ENCODE measurements at regions of chr19 and their contacts with region 1.

Region 1: GRCh38 chr19:33406521-33407139 is 33.1 kb downstream of the CEBPG start:
- DNase-seq: peak; percentile 63 to 83 (median 72)
- ATAC-seq: peak; percentile 47 to 79 (median 74)
- H3K4me3 ChIP-seq: no peak overlapping the region
- H3K27ac ChIP-seq: no peak overlapping the region
- H3K4me1 ChIP-seq: peaks cover 0 to 13% (median 0%) of the 10 kb centered on the region in 12 donors
- H3K27me3 ChIP-seq: no peaks in the 10 kb centered on the region
- CTCF ChIP-seq: peak; percentile 90 to 97 (median 94)
- POLR2A ChIP-seq: no peak

Region 2: DNA sequence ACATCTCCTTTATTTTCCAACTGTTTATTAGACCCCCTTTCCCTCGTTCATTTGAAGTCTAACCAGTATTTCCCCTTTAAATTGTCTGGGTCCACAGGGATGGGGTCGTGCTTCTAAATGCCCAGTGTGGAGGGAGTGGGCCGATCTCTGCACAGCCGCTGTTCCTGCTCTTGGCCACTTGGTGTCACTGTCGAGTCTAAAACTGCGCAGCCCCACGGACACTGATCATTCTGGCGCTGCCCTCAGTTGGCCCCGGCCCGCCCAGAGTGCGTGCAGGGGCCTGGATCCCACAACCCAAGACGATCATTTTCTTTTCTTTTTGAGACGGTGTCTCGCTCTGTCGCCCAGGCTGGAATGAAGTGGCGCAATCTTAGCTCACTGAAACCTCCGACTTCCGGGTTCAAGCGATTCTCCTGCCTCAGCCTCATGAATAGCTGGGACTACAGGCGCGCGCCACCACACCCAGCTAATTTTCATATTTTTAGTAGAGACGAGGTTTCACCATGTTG is 262.7 kb before region 1 on chr19:
- intact Hi-C with region 1: loop called in 8 of 10 experiments (anchors 5 to 10 kb)
- DNase-seq: peak; percentile 43 to 79 (median 68)
- ATAC-seq: peak; percentile 88 to 97 (median 95)
- H3K4me3 ChIP-seq: no peak overlapping the region
- H3K27ac ChIP-seq: no peak overlapping the region
- H3K4me1 ChIP-seq: peaks cover 0 to 5% (median 0%) of the 10 kb centered on the region in 12 donors
- H3K27me3 ChIP-seq: peaks cover 0 to 7% (median 0%) of the 10 kb centered on the region in 9 donors
- CTCF ChIP-seq: peak; percentile 80 to 94 (median 90)
- POLR2A ChIP-seq: no peak

Region 3: DNA sequence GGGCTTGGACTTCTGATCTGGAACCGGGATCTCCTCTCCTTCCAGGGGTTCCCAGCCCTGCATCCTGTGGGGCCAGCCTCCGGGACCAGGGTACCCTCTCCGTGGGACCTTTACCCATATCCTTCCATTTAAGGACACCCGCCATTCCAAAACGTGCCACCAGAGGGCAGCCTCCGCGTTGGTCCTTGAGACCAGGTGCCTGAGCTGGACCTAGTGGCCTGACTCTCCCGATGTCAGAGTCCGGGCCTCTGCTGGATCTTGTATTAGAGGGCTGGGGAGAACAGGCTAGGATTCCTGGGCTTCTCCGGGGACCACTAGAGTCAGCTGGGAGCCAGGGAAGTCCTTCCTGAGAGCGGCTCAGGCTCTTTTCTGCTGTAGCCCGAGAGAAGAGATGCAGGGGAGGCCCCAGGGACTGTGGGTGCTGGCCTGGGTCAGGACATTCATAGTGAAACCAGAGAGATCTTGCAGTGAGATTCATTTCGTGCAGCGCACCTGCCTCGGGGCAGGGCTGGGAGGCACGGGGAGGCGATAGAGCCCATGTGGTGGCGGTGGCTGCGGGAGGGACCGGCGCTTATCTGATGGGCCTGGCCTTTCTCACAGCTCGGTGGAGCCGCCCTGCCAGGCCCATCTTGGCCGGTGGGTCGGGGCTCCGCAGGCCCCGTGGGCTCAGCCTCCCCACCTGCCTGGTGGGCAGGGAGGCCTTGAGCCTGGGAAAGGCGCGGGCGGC is 171.2 kb before region 1 on chr19:
- intact Hi-C with region 1: loop called (anchors 1 to 2 kb)
- DNase-seq: peak; percentile 61 to 91 (median 77)
- ATAC-seq: peak in 3 of 4 donors; percentile 67 to 82 (median 71)
- H3K4me3 ChIP-seq: no peak overlapping the region
- H3K27ac ChIP-seq: no peak overlapping the region
- H3K4me1 ChIP-seq: peaks cover 0 to 3% (median 0%) of the 10 kb centered on the region in 12 donors
- H3K27me3 ChIP-seq: peaks cover 0 to 33% (median 6%) of the 10 kb centered on the region in 9 donors
- CTCF ChIP-seq: peak; percentile 82 to 94 (median 90)
- POLR2A ChIP-seq: no peak

Region 4: DNA sequence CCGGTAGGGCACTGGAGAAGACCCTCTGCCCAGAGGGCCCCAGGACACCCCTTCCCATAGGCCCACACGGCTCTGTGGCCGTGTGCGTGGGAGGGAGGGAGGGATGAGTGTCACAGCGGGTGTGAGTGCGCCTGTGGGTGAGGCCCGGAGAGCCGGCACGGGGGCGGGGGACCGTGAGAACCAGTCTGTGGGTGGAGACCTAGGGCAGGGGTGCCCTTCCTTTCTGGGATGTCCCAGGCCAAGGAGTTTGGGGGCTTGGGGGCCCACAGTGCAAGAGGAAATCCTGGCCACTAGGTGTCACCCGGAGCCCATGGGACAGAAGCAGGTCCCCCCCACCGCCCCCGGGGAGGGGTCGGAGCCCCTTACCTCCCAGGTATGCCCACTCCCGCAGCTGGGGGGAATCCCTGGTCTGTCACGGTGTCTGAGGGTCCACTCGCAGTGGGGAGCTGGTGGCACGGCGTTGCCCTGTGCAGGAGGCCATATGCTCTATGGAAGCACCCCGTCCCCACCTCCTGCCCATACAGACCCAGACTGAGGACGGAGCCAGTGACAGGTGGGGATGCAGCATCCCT is 165.0 kb before region 1 on chr19:
- intact Hi-C with region 1: loop called in 6 of 10 experiments (anchors 1 to 2 kb)
- DNase-seq: peak in 2 of 5 donors; percentile 27 to 69
- ATAC-seq: peak in 3 of 4 donors; percentile 51 to 67 (median 58)
- H3K4me3 ChIP-seq: no peak overlapping the region
- H3K27ac ChIP-seq: no peak overlapping the region
- H3K4me1 ChIP-seq: peaks cover 0 to 8% (median 2%) of the 10 kb centered on the region in 12 donors
- H3K27me3 ChIP-seq: peaks cover 0 to 17% (median 0%) of the 10 kb centered on the region in 9 donors
- CTCF ChIP-seq: peak; percentile 56 to 80 (median 72)
- POLR2A ChIP-seq: no peak

Region 5: GRCh38 chr19:33302175-33302973 is 104.3 kb before region 1 on chr19 and contains the start of gene CEBPA:
- intact Hi-C with region 1: loop called in 7 of 10 experiments (anchors 5 to 10 kb)
- DNase-seq: peak; percentile 74 to 92 (median 80)
- ATAC-seq: peak; percentile 52 to 94 (median 90)
- H3K4me3 ChIP-seq: peak within 1 kb of the TSS; percentile 49 to 93 (median 72)
- H3K27ac ChIP-seq: peak within 1 kb of the TSS in 9 of 12 donors; percentile 1 to 88 (median 57)
- H3K4me1 ChIP-seq: peaks cover 0 to 43% (median 15%) of the 10 kb centered on the region in 12 donors
- H3K27me3 ChIP-seq: peaks cover 0 to 44% (median 18%) of the 10 kb centered on the region in 9 donors
- CTCF ChIP-seq: peak in 8 of 12 donors; percentile 12 to 66 (median 54)
- POLR2A ChIP-seq: peak in 1 of 2 donors; percentile 91
- total RNA-seq, gene CEBPA: 0.69 to 40.1 (median 2.5) TPM

Region 6: DNA sequence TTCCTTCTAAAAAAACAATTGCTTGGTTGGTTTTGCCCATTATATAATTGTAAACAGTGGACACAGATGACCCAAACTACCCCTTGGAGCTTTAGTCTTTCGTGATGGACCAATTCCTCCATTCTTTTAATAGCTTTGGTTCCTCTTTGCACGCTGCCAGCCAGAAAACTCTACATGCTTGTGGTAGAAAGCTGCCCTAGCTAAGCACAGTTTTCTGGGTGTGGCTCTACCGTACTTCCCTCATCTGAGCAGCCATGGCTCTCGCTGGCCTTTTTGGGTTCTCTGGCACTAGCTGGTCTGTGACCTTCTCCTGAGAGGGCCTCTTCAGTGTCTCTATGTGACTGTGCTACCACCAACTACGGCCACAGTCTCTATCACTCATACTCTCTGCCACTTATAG is 74.4 kb before region 1 on chr19:
- intact Hi-C with region 1: loop called in 1 of 10 experiments (anchors 2 kb)
- DNase-seq: peak in 3 of 5 donors; percentile 16 to 49 (median 22)
- ATAC-seq: peak in 3 of 4 donors; percentile 29 to 66 (median 58)
- H3K4me3 ChIP-seq: no peak overlapping the region
- H3K27ac ChIP-seq: peak overlapping the region in 1 of 12 donors; percentile 63
- H3K4me1 ChIP-seq: peaks cover 0 to 40% (median 0%) of the 10 kb centered on the region in 12 donors
- H3K27me3 ChIP-seq: peaks cover 0 to 16% (median 0%) of the 10 kb centered on the region in 9 donors
- CTCF ChIP-seq: no peak
- POLR2A ChIP-seq: no peak

Region 7: DNA sequence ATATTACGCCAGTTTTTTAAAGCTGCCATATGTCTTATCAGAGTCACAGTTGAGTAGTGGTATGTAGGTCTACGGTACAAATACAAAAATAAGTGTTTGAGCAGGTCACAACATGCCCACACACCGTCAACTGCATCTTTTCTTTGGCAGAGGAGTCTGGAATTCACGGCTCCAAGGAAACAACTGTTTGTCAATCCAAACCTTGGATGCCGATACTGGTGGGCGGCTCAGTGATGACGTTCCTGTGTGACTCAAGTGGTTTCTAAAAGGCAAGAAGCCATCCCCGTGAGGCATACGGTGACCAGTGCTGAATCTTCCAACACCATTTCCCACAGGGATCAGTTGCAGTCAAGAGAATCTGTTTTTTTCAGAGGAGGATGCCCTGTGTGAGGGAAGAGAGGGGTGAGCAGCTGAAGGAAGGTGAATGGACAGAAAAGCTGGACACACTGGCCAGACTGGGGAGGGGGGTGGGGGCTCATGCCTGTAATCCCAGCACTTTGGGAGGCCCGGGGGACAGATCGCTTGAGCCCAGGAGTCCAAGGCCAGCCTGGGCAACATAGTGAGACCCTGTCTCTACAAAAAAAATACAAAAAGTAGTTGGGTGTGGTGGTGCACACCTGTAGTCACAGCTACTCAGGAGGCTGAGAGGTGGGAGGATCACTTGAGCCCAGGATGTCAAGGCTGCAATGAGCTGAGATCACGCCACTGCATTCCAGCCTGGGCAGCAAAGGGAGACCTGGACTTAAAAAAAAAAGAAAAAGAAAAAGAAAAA is 55.9 kb before region 1 on chr19:
- intact Hi-C with region 1: loop called in 1 of 10 experiments (anchors 10 kb)
- DNase-seq: no peak
- ATAC-seq: peak in 2 of 4 donors; percentile 20 to 42
- H3K4me3 ChIP-seq: no peak overlapping the region
- H3K27ac ChIP-seq: no peak overlapping the region
- H3K4me1 ChIP-seq: peaks cover 0 to 9% (median 0%) of the 10 kb centered on the region in 12 donors
- H3K27me3 ChIP-seq: peaks cover 0 to 20% (median 3%) of the 10 kb centered on the region in 9 donors
- CTCF ChIP-seq: no peak
- POLR2A ChIP-seq: no peak